SK-N-SH (cell line): ENCODE measurements at regions of chr1 and their contacts with region 1.

Region 1: GRCh38 chr1:46547481-46548383 is 3.7 kb downstream of the KNCN start:
- DNase-seq: peak; percentile 64
- H3K4me3 ChIP-seq: no peak overlapping the region
- H3K27ac ChIP-seq: no peak overlapping the region
- H3K4me1 ChIP-seq: peaks cover 0 to 9% of the 10 kb centered on the region in 2 experiments; a peak in 1 of 4 replicates
- H3K27me3 ChIP-seq: peaks cover 18% of the 10 kb centered on the region; the same call in 1 of the 2 replicates
- CTCF ChIP-seq: peak; percentile 70
- EP300 ChIP-seq: no peak
- RAD21 ChIP-seq: peak; percentile 61

Region 2: GRCh38 chr1:46562498-46562897 is 14.8 kb after region 1 on chr1:
- CTCF ChIA-PET with region 1: interaction called, 11 read pairs
- POLR2A ChIA-PET with region 1: interaction called, 3 read pairs
- DNase-seq: no peak
- H3K4me3 ChIP-seq: no peak overlapping the region
- H3K27ac ChIP-seq: no peak overlapping the region
- H3K4me1 ChIP-seq: no peaks in the 10 kb centered on the region
- H3K27me3 ChIP-seq: no peaks in the 10 kb centered on the region
- CTCF ChIP-seq: no peak
- EP300 ChIP-seq: no peak
- RAD21 ChIP-seq: no peak

Region 3: GRCh38 chr1:46784666-46785065 is 236.9 kb after region 1 on chr1:
- CTCF ChIA-PET with region 1: no interaction called
- POLR2A ChIA-PET with region 1: no interaction called
- DNase-seq: no peak
- H3K4me3 ChIP-seq: no peak overlapping the region
- H3K27ac ChIP-seq: no peak overlapping the region
- H3K4me1 ChIP-seq: no peaks in the 10 kb centered on the region
- H3K27me3 ChIP-seq: no peaks in the 10 kb centered on the region
- CTCF ChIP-seq: no peak
- EP300 ChIP-seq: no peak
- RAD21 ChIP-seq: no peak